ENCODE measurements at regions of chr3 and their contacts with region 1.

Region 1: DNA sequence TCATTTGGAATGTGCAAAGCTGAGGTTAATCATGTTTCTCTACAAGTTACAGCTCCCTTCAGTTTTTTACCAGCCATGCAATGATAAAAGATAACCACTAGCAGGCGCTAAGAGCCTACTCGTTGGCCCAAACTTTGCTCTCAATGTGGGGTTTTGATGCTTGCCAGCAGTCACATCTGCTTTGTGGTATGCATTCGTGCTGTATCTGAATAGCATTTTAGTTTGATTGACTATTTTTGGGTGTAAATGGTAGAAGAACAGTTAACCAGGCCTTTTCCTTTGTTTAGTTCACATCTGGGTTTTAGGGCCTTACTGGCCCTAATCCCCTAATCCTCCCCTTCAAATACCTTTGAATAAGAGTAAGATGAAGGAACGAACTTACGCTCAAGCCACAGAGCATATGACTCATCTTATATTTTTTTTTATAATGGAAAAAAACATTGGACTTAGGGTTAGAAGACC is 4.4 kb upstream of the CLDN11 start:
- DNase-seq: no peak
- H3K4me3 ChIP-seq: no peak overlapping the region
- H3K27ac ChIP-seq: no peak overlapping the region
- H3K4me1 ChIP-seq: peaks cover under 1 to 15% (median 12%) of the 10 kb centered on the region in 6 donors
- H3K27me3 ChIP-seq: peaks cover 0 to 18% (median 14%) of the 10 kb centered on the region in 7 donors
- CTCF ChIP-seq: peak in 10 of 11 experiments; percentile 54 to 86 (median 78)
- POLR2A ChIP-seq: no peak

Region 2: GRCh38 chr3:170154569-170155143 is 259.6 kb before region 1 on chr3:
- intact Hi-C with region 1: no loop called
- DNase-seq: no peak
- H3K4me3 ChIP-seq: peak overlapping the region in 1 of 8 donors; percentile 25
- H3K27ac ChIP-seq: peak overlapping the region; percentile 51 to 88 (median 79)
- H3K4me1 ChIP-seq: peaks cover 19 to 96% (median 57%) of the 10 kb centered on the region in 6 donors
- H3K27me3 ChIP-seq: no peaks in the 10 kb centered on the region
- CTCF ChIP-seq: no peak
- POLR2A ChIP-seq: no peak

Region 3: GRCh38 chr3:170307671-170308403 is 106.4 kb before region 1 on chr3:
- intact Hi-C with region 1: loop called (anchors 5 kb)
- DNase-seq: no peak
- H3K4me3 ChIP-seq: no peak overlapping the region
- H3K27ac ChIP-seq: no peak overlapping the region
- H3K4me1 ChIP-seq: peaks cover 0 to 12% (median 3%) of the 10 kb centered on the region in 6 donors
- H3K27me3 ChIP-seq: no peaks in the 10 kb centered on the region
- CTCF ChIP-seq: no peak
- POLR2A ChIP-seq: no peak

Region 4: GRCh38 chr3:170499565-170500156 is 85.4 kb after region 1 on chr3:
- intact Hi-C with region 1: no loop called
- DNase-seq: no peak
- H3K4me3 ChIP-seq: no peak overlapping the region
- H3K27ac ChIP-seq: no peak overlapping the region
- H3K4me1 ChIP-seq: no peaks in the 10 kb centered on the region
- H3K27me3 ChIP-seq: peaks cover 0 to 8% (median 0%) of the 10 kb centered on the region in 7 donors
- CTCF ChIP-seq: peak in 6 of 11 experiments; percentile 16 to 48 (median 30)
- POLR2A ChIP-seq: no peak

Region 5: GRCh38 chr3:170811928-170812591 is 397.8 kb after region 1 on chr3:
- intact Hi-C with region 1: loop called (anchors 5 kb)
- DNase-seq: no peak
- H3K4me3 ChIP-seq: no peak overlapping the region
- H3K27ac ChIP-seq: no peak overlapping the region
- H3K4me1 ChIP-seq: peaks cover 0 to 15% (median 0%) of the 10 kb centered on the region in 6 donors
- H3K27me3 ChIP-seq: no peaks in the 10 kb centered on the region
- CTCF ChIP-seq: peak; percentile 74 to 96 (median 87)
- POLR2A ChIP-seq: no peak